CD4-positive, alpha-beta memory T cell (primary cell): ENCODE measurements at regions of chr1 and their contacts with region 1.

Region 1: DNA sequence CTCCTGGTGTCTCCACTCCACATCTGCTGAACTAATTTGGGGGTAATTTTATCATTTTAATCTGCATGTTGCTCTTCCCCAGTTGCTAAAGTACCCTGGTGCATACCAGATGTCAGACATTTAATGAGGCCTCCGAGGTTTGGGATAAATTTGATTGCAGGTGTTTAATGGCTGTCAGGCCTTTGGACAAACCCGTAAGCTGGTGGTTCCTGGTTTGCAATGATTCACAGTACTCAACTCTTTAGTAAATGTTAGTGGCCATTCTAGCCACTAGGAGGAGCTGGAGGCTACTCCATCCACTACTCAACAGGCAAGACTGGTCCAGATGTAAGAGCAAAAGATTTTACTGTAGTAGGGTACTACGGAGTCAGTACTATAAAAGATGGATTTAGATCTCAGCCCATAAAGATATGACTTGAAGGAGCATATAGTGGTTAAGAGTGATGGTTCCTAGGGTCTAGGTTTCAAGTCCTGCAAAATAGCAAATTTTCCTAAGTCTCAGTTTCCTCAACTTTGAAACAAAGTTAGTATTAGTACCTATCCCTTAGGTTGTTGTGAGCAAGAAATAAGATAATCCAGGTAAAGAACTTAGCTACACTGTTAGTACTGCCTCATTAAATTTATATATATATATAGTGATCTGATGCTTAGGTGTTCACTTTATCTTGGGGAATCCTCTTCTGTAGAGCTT is 132.8 kb downstream of the SNX7 start:
- DNase-seq: peak; percentile 65 to 72 (median 70)
- H3K4me3 ChIP-seq: no peak overlapping the region
- H3K4me3 Mint-ChIP-seq: peak overlapping the region in 1 of 8 donors; percentile 60
- H3K27ac ChIP-seq: no peak overlapping the region
- H3K27ac Mint-ChIP-seq: no peak overlapping the region
- H3K4me1 ChIP-seq: peaks cover 18% of the 10 kb centered on the region
- H3K4me1 Mint-ChIP-seq: peaks cover 24 to 35% (median 26%) of the 10 kb centered on the region in 4 donors
- H3K27me3 ChIP-seq: no peaks in the 10 kb centered on the region
- H3K27me3 Mint-ChIP-seq: no peaks in the 10 kb centered on the region

Region 2: GRCh38 chr1:98749152-98749756 is 45.1 kb before region 1 on chr1:
- CTCF ChIA-PET with region 1: interaction called, 12 read pairs
- POLR2A ChIA-PET with region 1: no interaction called
- intact Hi-C with region 1: loop called (anchors 1 kb)
- DNase-seq: peak in 4 of 5 donors; percentile 2 to 25 (median 22)
- H3K4me3 ChIP-seq: no peak overlapping the region
- H3K4me3 Mint-ChIP-seq: no peak overlapping the region
- H3K27ac ChIP-seq: no peak overlapping the region
- H3K27ac Mint-ChIP-seq: no peak overlapping the region
- H3K4me1 ChIP-seq: no peaks in the 10 kb centered on the region
- H3K4me1 Mint-ChIP-seq: no peaks in the 10 kb centered on the region
- H3K27me3 ChIP-seq: no peaks in the 10 kb centered on the region
- H3K27me3 Mint-ChIP-seq: peaks cover 0 to under 1% of the 10 kb centered on the region in 2 donors

Region 3: GRCh38 chr1:98940722-98941079 is 146.4 kb after region 1 on chr1:
- CTCF ChIA-PET with region 1: interaction called, 22 read pairs
- POLR2A ChIA-PET with region 1: interaction called, 3 read pairs
- intact Hi-C with region 1: loop called (anchors 1 kb)
- DNase-seq: no peak
- H3K4me3 ChIP-seq: no peak overlapping the region
- H3K4me3 Mint-ChIP-seq: no peak overlapping the region
- H3K27ac ChIP-seq: no peak overlapping the region
- H3K27ac Mint-ChIP-seq: no peak overlapping the region
- H3K4me1 ChIP-seq: no peaks in the 10 kb centered on the region
- H3K4me1 Mint-ChIP-seq: peaks cover 0 to 6% (median 0%) of the 10 kb centered on the region in 4 donors
- H3K27me3 ChIP-seq: no peaks in the 10 kb centered on the region
- H3K27me3 Mint-ChIP-seq: peaks cover 0 to 1% of the 10 kb centered on the region in 2 donors

Region 4: DNA sequence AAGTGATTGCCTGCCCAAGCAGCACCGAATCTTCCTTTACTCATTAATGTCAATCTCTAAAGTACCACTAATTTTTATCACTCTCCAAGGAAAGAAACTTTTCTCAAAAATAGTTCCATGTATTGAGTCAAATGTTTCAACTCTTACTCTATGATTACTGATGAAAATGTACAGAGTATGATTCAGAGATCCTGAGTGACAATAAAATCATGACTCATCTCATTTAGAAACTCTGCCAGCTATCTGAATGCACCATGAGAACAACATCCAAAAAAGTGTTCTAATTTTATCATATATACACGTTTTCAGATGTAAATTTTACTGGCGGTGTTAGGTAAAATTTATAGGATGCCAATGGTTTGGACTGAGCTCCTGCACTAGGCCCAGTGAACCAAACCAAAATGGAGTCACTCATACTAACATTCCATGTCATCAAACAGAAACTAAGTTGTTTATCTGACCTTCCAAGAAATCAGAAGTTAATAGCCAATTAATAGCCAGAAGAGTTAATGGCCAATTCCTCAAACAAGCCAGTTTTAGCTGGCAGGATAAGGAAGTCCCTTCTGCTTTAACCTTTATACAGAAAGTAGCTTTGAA is 187.7 kb after region 1 on chr1:
- CTCF ChIA-PET with region 1: no interaction called
- POLR2A ChIA-PET with region 1: no interaction called
- intact Hi-C with region 1: no loop called
- DNase-seq: no peak
- H3K4me3 ChIP-seq: no peak overlapping the region
- H3K4me3 Mint-ChIP-seq: no peak overlapping the region
- H3K27ac ChIP-seq: no peak overlapping the region
- H3K27ac Mint-ChIP-seq: no peak overlapping the region
- H3K4me1 ChIP-seq: no peaks in the 10 kb centered on the region
- H3K4me1 Mint-ChIP-seq: peaks cover 0 to 1% (median 0%) of the 10 kb centered on the region in 4 donors
- H3K27me3 ChIP-seq: no peaks in the 10 kb centered on the region
- H3K27me3 Mint-ChIP-seq: no peaks in the 10 kb centered on the region

Region 5: GRCh38 chr1:99180343-99180808 is 386.0 kb after region 1 on chr1:
- CTCF ChIA-PET with region 1: interaction called, 22 read pairs
- POLR2A ChIA-PET with region 1: no interaction called
- intact Hi-C with region 1: loop called (anchors 1 kb)
- DNase-seq: peak; percentile 49 to 63 (median 55)
- H3K4me3 ChIP-seq: no peak overlapping the region
- H3K4me3 Mint-ChIP-seq: no peak overlapping the region
- H3K27ac ChIP-seq: no peak overlapping the region
- H3K27ac Mint-ChIP-seq: no peak overlapping the region
- H3K4me1 ChIP-seq: no peaks in the 10 kb centered on the region
- H3K4me1 Mint-ChIP-seq: no peaks in the 10 kb centered on the region
- H3K27me3 ChIP-seq: no peaks in the 10 kb centered on the region
- H3K27me3 Mint-ChIP-seq: peaks cover 1 to 3% of the 10 kb centered on the region in 2 donors

Region 6: GRCh38 chr1:99685516-99686180 is 891.3 kb after region 1 on chr1:
- CTCF ChIA-PET with region 1: interaction called, 5 read pairs
- POLR2A ChIA-PET with region 1: no interaction called
- intact Hi-C with region 1: loop called (anchors 5 kb)
- DNase-seq: peak in 4 of 5 donors; percentile 13 to 21 (median 16)
- H3K4me3 ChIP-seq: no peak overlapping the region
- H3K4me3 Mint-ChIP-seq: no peak overlapping the region
- H3K27ac ChIP-seq: no peak overlapping the region
- H3K27ac Mint-ChIP-seq: no peak overlapping the region
- H3K4me1 ChIP-seq: no peaks in the 10 kb centered on the region
- H3K4me1 Mint-ChIP-seq: peaks cover 0 to 2% (median under 1%) of the 10 kb centered on the region in 4 donors
- H3K27me3 ChIP-seq: no peaks in the 10 kb centered on the region
- H3K27me3 Mint-ChIP-seq: peaks cover 4 to 6% of the 10 kb centered on the region in 2 donors